ENCODE measurements at regions of chr3 and their contacts with region 1.

Region 1: GRCh38 chr3:32460031-32460749 is 42.5 kb downstream of the CMTM6 start:
- DNase-seq: peak; percentile 95
- H3K4me3 Mint-ChIP-seq: peak overlapping the region; percentile 79
- H3K27ac Mint-ChIP-seq: peak overlapping the region; percentile 93
- H3K4me1 Mint-ChIP-seq: peaks cover 37% of the 10 kb centered on the region
- H3K27me3 Mint-ChIP-seq: no peaks in the 10 kb centered on the region

Region 2: GRCh38 chr3:32391643-32392535 is 68.3 kb before region 1 on chr3 and contains the start of gene CMTM7:
- intact Hi-C with region 1: loop called (anchors 1 kb)
- DNase-seq: peak; percentile 92
- H3K4me3 Mint-ChIP-seq: peak within 1 kb of the TSS; percentile 90
- H3K27ac Mint-ChIP-seq: peak within 1 kb of the TSS; percentile 99
- H3K4me1 Mint-ChIP-seq: peaks cover 46% of the 10 kb centered on the region
- H3K27me3 Mint-ChIP-seq: no peaks in the 10 kb centered on the region
- total RNA-seq, gene CMTM7: 45.0 and 46.3 TPM in 2 replicates

Region 3: GRCh38 chr3:32401556-32402081 is 58.6 kb before region 1 on chr3:
- intact Hi-C with region 1: loop called (anchors 2 kb)
- DNase-seq: peak; percentile 90
- H3K4me3 Mint-ChIP-seq: peak overlapping the region; percentile 92
- H3K27ac Mint-ChIP-seq: peak overlapping the region; percentile 99
- H3K4me1 Mint-ChIP-seq: peaks cover 59% of the 10 kb centered on the region
- H3K27me3 Mint-ChIP-seq: no peaks in the 10 kb centered on the region

Region 4: DNA sequence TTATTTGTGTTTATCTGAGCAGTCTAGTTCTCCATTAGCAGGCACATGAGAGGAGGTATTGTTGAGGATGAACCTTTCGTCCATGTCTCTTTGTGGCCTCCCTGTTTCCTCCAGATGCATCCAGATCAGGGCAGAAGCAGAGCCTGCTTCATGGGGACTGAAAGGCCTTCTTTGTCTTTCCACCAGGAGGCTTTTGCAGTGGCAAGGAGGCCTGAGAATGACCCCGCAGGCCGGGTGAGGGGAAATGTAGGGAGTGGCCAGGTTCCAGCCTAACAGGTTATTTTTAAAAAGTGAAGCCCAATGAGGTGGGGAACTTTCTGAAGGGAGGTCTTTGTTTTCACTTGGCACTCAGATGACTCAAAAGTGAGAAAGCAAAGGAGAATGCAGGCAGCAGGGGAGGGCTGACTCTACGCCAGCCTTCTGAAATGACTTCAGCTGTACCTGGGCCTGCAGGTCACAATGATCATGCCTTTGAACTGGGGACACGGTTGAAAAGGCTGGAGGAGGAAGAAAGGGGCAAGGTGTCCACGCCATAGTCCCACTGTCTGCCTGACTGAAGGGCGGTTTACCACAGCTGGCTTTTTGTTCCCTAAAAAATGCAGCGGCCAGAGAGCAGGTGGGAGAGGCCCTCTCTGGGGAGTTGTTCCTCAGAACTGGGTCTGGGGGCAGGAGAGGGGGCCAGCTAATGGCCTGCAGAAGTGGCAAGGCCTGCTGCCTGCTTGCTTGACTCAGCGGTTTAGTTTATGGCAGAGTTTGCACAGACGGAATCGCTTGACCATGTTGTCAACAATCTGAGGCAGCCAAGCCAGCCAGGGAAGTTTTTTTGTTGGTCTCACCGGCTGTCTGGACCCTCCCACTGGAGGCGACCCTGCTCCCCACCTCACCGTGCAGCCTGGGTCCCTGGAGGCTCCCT is 39.8 kb before region 1 on chr3:
- intact Hi-C with region 1: loop called (anchors 5 kb)
- DNase-seq: peak; percentile 74
- H3K4me3 Mint-ChIP-seq: peak overlapping the region; percentile 60
- H3K27ac Mint-ChIP-seq: peak overlapping the region; percentile 87
- H3K4me1 Mint-ChIP-seq: peaks cover 77% of the 10 kb centered on the region
- H3K27me3 Mint-ChIP-seq: no peaks in the 10 kb centered on the region

Region 5: DNA sequence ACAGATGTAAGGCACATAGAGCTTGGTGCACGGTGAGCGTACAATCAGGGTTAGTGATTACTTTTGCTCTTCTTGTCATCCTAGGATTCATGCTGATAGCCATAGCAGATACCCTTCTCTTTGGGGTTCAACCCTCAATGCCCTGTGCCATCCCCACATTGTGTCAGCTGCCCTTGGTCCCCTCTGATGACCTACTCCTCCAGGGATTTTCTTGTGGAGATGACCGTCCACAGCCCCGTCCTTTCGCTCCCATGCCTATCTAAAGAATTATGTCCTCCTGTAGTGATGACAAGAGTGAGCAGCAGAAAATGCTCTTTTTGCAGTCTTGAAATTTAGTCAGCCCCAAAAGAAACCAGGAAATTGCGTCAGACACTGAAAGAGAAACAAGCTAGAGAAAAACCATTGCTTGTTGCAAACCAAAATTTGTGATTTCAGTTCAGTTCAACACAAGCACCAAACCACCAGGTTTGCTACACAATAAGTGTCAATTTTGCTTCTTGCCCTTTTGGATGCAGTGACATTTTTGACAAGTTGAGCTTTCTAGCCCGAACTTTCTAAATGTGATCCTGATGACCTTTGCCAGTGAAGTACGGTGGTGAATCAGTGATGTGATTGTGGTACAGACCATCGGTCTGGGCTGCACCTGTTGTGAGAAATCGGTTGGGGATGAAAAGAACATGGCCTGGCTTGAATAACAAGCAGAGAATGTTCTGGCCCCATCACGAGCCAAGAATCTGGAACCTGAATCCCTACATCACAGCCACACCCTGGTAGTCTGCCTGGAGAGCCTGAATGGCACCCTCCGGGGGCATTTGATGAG is 27.3 kb before region 1 on chr3:
- intact Hi-C with region 1: loop called (anchors 2 kb)
- DNase-seq: peak; percentile 87
- H3K4me3 Mint-ChIP-seq: peak overlapping the region; percentile 70
- H3K27ac Mint-ChIP-seq: peak overlapping the region; percentile 95
- H3K4me1 Mint-ChIP-seq: peaks cover 73% of the 10 kb centered on the region
- H3K27me3 Mint-ChIP-seq: no peaks in the 10 kb centered on the region

Region 6: DNA sequence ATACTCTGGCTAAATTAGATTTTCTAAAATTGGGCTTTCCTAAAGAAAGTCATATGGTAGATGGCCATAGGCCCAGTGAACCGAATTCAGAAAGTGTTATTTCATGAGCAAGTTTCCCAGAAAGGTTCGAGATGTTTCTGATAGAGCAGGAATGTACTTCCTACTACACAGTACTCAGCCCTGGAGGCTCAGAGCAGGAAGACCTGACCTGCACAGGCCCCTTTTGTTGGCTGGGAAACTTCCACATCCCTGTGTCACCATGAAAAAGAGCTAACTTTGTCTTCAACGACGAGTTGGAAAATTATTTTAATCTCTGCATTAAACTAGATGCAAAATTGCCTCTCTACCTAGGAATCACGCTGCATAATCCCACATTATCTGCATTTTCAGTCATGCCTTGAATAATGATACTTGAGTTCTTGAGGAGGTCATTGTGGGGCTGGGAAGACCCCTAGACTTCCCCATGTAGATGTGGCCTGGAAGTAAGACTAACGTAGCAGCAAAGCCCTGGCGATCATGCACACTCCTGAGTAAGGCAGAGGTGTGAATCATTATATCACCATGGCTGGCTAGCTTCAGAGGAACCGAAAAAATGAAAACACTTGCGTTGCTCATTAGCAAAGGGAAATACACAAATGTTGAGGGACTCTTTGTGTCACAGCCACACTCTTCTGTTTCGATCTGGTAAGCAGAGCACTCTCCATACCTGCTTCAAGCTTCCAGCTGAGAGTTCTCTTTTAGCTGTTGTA is 21.4 kb before region 1 on chr3:
- intact Hi-C with region 1: loop called (anchors 1 kb)
- DNase-seq: no peak
- H3K4me3 Mint-ChIP-seq: peak overlapping the region; percentile 67
- H3K27ac Mint-ChIP-seq: peak overlapping the region; percentile 88
- H3K4me1 Mint-ChIP-seq: peaks cover 61% of the 10 kb centered on the region
- H3K27me3 Mint-ChIP-seq: no peaks in the 10 kb centered on the region

Region 7: DNA sequence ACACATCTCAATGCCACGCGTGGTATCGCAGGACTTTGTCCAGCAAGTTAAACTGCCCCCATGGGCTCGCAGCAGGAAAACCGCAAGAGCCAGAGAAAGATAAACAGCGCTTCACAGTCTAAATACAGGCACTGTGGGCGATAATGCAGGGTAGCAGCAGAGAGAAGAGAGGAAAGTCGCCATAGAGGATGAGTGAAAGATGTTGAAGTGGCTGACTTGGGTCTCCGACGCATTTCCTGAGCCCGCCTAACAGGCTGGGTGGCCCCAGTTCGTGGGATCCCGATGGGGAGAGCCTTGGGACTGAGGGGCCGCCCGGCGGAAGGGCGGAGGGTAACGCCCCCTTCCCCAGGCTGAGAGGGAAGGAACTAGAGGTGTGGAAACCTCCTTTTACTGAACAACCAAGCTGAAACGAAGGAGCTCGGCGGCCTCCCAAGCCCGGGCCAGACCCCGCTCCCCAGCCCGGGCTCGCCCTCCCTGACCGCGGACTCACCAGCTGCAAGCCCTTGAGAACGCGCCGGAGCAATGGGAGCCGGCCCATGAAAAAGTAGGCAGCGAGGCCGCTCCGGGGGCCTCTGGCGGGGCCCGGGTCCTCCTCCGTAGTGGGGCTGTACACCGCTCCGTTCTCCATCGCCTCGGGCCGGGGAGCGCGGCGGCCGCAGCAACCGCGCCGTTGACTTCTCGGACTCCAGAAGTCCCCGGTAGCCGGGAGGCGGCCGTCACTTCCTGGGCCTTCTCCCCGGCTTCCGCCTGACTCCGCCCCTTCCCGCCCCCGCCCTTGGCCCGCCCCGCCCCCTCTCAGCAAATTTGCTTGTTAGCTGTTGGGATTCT is 42.1 kb after region 1 on chr3 and contains the start of gene CMTM6:
- intact Hi-C with region 1: loop called (anchors 2 kb)
- DNase-seq: peak; percentile 92
- H3K4me3 Mint-ChIP-seq: peak within 1 kb of the TSS; percentile 90
- H3K27ac Mint-ChIP-seq: peak within 1 kb of the TSS; percentile 86
- H3K4me1 Mint-ChIP-seq: peaks cover 28% of the 10 kb centered on the region
- H3K27me3 Mint-ChIP-seq: peaks cover 2% of the 10 kb centered on the region
- total RNA-seq, gene CMTM6: 79.3 and 79.6 TPM in 2 replicates

Measured in activated CD4-positive, alpha-beta T cell treated with anti-CD3 and anti-CD28 coated beads, Interleukin-2, amount 10 ng/mL, durations not matched to agents 24 days and 14 days (primary cell).